PC-9 (cell line): ENCODE measurements at regions of chr2 and their contacts with region 1.

Region 1: GRCh38 chr2:96138179-96139145 is at the start of gene ASTL:
- DNase-seq: peak; percentile 80 to 89
- H3K4me3 ChIP-seq: peak within 1 kb of the TSS; percentile 22; the same call in 1 of the 2 replicates
- H3K27ac ChIP-seq: no peak within 1 kb of the TSS
- H3K4me1 ChIP-seq: peaks cover 9% of the 10 kb centered on the region
- H3K27me3 ChIP-seq: no peaks in the 10 kb centered on the region
- CTCF ChIP-seq: peak; percentile 71
- total RNA-seq, gene ASTL: not detected in 2 replicates

Region 2: GRCh38 chr2:96099861-96100798 is 38.3 kb before region 1 on chr2:
- CTCF ChIA-PET with region 1: interaction called, 17 read pairs
- POLR2A ChIA-PET with region 1: no interaction called
- intact Hi-C with region 1: no loop called
- DNase-seq: no peak
- H3K4me3 ChIP-seq: no peak overlapping the region
- H3K27ac ChIP-seq: no peak overlapping the region
- H3K4me1 ChIP-seq: peaks cover 6% of the 10 kb centered on the region
- H3K27me3 ChIP-seq: peaks cover 4% of the 10 kb centered on the region; the same call in 1 of the 2 replicates
- CTCF ChIP-seq: no peak

Region 3: GRCh38 chr2:96110621-96111256 is 27.7 kb before region 1 on chr2:
- CTCF ChIA-PET with region 1: no interaction called
- POLR2A ChIA-PET with region 1: no interaction called
- intact Hi-C with region 1: no loop called
- DNase-seq: no peak
- H3K4me3 ChIP-seq: no peak overlapping the region
- H3K27ac ChIP-seq: no peak overlapping the region
- H3K4me1 ChIP-seq: no peaks in the 10 kb centered on the region
- H3K27me3 ChIP-seq: peaks cover 32% of the 10 kb centered on the region
- CTCF ChIP-seq: no peak

Region 4: GRCh38 chr2:96260404-96261260 is 122.2 kb after region 1 on chr2:
- CTCF ChIA-PET with region 1: no interaction called
- POLR2A ChIA-PET with region 1: no interaction called
- intact Hi-C with region 1: loop called (anchors 2 kb)
- DNase-seq: peak; percentile 87 to 97
- H3K4me3 ChIP-seq: peak overlapping the region; percentile 24; the same call in 1 of the 2 replicates
- H3K27ac ChIP-seq: peak overlapping the region; percentile 70
- H3K4me1 ChIP-seq: peaks cover 56% of the 10 kb centered on the region
- H3K27me3 ChIP-seq: no peaks in the 10 kb centered on the region
- CTCF ChIP-seq: peak; percentile 68; the same call in 1 of the 2 replicates

Region 5: GRCh38 chr2:96520231-96520630 is 381.8 kb after region 1 on chr2:
- CTCF ChIA-PET with region 1: interaction called, 16 read pairs
- POLR2A ChIA-PET with region 1: no interaction called
- intact Hi-C with region 1: no loop called
- DNase-seq: no peak
- H3K4me3 ChIP-seq: no peak overlapping the region
- H3K27ac ChIP-seq: no peak overlapping the region
- H3K4me1 ChIP-seq: no peaks in the 10 kb centered on the region
- H3K27me3 ChIP-seq: peaks cover 15% of the 10 kb centered on the region; the same call in 1 of the 2 replicates
- CTCF ChIP-seq: no peak

Region 6: GRCh38 chr2:96839293-96839874 is 700.9 kb after region 1 on chr2:
- CTCF ChIA-PET with region 1: no interaction called
- POLR2A ChIA-PET with region 1: interaction called, 13 read pairs
- intact Hi-C with region 1: no loop called
- DNase-seq: no peak
- H3K4me3 ChIP-seq: no peak overlapping the region
- H3K27ac ChIP-seq: no peak overlapping the region
- H3K4me1 ChIP-seq: no peaks in the 10 kb centered on the region
- H3K27me3 ChIP-seq: no peaks in the 10 kb centered on the region
- CTCF ChIP-seq: no peak